Posterior vena cava (tissue), 2 donors: ENCODE measurements at regions of chr11 and their contacts with region 1.

Region 1: GRCh38 chr11:16605894-16606783 is 132.3 kb upstream of the C11orf58 start:
- DNase-seq: peak; percentile 97

Region 2: DNA sequence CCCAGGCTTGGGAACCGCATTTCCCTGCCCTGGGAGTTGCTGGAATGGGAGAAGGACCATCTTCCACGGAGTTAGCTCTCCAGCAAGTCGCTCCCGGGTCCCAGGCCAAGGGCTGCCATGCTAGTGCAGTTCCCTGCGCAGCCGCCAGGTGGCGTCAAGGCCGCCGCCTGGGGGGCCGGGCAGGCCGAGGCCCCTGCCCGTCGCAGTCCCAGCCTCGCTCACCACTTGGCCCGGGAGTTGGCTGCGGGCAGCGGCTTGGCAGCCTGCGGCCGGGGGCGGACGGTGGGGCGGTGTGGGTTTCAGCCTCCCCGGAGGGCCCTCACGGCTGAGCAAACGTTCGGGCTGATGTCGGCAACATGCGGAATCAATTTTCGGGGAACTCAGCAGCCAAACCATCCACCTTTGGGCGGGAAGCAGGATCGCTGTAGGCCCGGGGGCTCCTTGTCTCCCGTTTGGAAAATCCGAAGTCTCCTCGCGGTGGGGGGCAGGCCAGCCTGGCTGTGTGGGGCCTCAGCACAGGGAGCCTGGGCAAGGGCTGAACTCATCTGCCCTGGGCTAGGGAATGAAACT is 664.9 kb before region 1 on chr11:
- intact Hi-C with region 1: loop called in 1 of 2 experiments (anchors 10 kb)
- DNase-seq: no peak